Naive thymus-derived CD4-positive, alpha-beta T cell (primary cell): ENCODE measurements at regions of chr10 and their contacts with region 1.

Region 1: DNA sequence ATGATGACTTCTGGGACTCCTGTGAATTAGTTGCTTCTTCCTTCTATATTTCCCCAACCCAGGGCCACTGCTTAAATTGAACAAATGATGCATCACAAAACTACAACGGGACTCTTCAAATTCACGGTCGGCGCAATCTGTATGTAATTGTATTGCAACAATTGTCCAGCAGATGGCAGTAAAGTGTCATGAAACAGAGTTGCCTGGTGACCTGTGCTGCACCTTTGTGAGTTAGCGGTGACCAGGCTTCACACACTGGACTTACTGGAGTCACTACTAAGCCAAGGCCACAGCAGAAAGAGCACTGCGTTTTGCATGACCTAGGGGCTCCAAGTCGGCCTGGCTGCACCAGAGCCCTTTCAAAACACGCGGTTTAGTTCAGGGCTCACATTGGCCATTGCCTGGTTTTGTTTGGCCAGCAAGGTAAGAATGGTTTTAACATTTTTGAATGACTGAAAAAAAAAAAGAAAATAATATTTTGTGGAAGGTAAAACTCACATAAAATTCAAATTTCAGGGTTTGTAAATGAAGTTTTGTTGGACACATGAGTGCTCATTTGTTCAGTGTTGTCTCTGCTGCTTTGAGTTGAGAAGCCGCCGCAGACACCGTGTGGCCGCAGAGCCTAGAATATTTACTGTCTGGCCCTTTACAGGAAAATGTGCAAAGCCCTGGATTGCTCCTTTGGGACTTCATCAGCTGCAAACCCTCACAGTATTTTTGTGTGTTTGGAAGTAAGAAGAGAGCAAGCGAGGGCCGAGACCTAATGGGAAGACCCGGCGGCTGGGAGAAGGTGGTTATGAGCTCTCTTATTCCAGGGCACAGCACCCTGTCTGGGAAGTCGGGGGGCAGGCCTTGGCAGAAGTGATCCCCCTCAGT is 23.2 kb upstream of the ZNF32 start:
- DNase-seq: peak in 8 of 9 donors; percentile 18 to 71 (median 52)
- ATAC-seq: peak; percentile 75
- H3K4me3 ChIP-seq: no peak overlapping the region
- H3K4me3 Mint-ChIP-seq: no peak overlapping the region
- H3K27ac ChIP-seq: no peak overlapping the region
- H3K27ac Mint-ChIP-seq: no peak overlapping the region
- H3K4me1 ChIP-seq: no peaks in the 10 kb centered on the region
- H3K4me1 Mint-ChIP-seq: peaks cover 2 to 11% (median 6%) of the 10 kb centered on the region in 7 donors
- H3K27me3 ChIP-seq: no peaks in the 10 kb centered on the region
- H3K27me3 Mint-ChIP-seq: peaks cover 33 to 46% (median 38%) of the 10 kb centered on the region in 5 donors

Region 2: DNA sequence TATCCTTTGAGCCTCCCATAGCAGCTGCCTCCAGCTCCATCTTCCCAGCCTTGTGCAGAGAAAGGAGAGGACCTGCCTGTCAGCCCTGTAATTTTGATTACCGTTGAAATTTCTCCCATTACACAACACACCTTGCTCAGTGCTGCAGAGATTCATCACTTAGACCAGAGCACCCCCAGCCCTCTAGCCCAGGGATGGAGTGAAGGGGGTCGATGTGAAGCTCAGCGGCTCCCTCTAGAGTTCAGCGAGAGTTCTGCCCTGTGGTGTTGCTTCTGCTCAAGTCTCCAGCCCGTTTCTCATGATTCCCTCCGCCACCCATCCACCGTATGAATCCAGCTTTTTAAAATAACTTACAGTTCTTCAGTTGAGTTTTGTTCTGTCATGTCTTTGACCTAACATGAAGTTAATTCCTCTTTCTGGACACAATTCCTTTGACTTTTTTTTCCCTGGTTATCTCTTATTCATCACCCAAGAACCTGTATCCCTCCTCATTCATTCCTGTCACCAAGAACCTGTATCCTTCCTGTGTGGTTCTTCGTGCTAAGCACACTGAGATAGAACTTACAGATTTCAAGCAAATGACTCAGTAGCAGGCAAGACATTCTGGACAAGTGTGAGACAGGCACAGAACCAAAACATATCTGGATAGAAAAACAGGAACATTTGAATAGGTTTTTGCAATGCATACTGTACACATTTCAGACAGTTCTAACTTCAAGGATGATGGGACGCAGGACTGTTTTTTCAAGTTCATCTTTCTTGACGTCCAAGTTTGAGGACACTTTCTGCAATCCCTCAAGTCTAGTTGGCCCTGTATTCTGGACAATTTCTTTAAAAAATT is 11.8 kb after region 1 on chr10:
- CTCF ChIA-PET with region 1: interaction called, 13 read pairs
- POLR2A ChIA-PET with region 1: no interaction called
- intact Hi-C with region 1: no loop called
- DNase-seq: no peak
- ATAC-seq: peak; percentile 69
- H3K4me3 ChIP-seq: no peak overlapping the region
- H3K4me3 Mint-ChIP-seq: no peak overlapping the region
- H3K27ac ChIP-seq: no peak overlapping the region
- H3K27ac Mint-ChIP-seq: no peak overlapping the region
- H3K4me1 ChIP-seq: no peaks in the 10 kb centered on the region
- H3K4me1 Mint-ChIP-seq: peaks cover 0 to 4% (median 1%) of the 10 kb centered on the region in 7 donors
- H3K27me3 ChIP-seq: no peaks in the 10 kb centered on the region
- H3K27me3 Mint-ChIP-seq: peaks cover 25 to 37% (median 32%) of the 10 kb centered on the region in 5 donors

Region 3: DNA sequence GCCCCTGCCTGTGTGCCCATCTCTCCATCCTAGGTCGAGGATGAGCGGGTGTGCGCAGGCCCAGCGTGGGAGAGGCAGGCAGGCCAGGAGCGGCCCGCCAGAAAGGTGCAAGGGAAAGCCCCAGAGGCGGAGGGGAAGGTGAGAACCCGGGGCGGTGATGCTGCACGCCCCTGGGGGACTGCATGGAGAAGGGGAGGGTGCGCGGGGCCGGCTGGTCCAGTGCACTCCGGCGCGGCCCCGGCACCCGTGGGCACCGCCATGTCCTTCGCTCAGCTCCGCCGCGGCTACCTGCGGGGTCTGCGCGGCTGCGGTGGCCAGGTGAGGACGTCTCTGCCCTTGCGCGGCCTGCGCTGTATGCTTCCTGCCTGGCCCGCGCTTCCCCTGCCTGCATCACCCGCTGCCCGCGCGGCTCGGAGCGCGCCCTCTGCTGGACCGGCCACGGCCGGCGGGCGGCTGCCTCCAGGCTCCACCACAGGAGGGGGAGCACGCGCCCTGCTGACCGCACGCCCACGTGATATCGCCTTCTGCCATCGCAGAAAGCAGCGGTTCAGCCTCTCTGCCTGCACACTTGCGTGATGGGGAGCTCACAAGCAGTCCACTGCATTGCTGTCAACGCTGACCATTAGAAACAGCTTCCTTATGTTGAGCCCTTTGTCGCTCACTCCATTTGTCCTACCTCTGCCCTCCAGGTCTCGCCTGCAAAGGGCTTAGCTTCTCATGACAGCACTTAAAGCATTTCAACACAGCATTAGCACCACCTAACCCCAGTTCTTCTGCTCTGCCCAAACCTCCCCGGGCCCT is 639.1 kb after region 1 on chr10:
- CTCF ChIA-PET with region 1: interaction called, 3 read pairs
- POLR2A ChIA-PET with region 1: no interaction called
- intact Hi-C with region 1: loop called (anchors 1 kb)
- DNase-seq: peak in 8 of 9 donors; percentile 6 to 74 (median 46)
- ATAC-seq: peak; percentile 89
- H3K4me3 ChIP-seq: peak overlapping the region; percentile 40
- H3K4me3 Mint-ChIP-seq: peak overlapping the region in 9 of 10 donors; percentile 7 to 65 (median 43)
- H3K27ac ChIP-seq: no peak overlapping the region
- H3K27ac Mint-ChIP-seq: no peak overlapping the region
- H3K4me1 ChIP-seq: peaks cover 0 to 5% of the 10 kb centered on the region in 2 donors
- H3K4me1 Mint-ChIP-seq: peaks cover 0 to 13% (median 7%) of the 10 kb centered on the region in 7 donors
- H3K27me3 ChIP-seq: no peaks in the 10 kb centered on the region
- H3K27me3 Mint-ChIP-seq: peaks cover 11 to 34% (median 19%) of the 10 kb centered on the region in 5 donors

Region 4: DNA sequence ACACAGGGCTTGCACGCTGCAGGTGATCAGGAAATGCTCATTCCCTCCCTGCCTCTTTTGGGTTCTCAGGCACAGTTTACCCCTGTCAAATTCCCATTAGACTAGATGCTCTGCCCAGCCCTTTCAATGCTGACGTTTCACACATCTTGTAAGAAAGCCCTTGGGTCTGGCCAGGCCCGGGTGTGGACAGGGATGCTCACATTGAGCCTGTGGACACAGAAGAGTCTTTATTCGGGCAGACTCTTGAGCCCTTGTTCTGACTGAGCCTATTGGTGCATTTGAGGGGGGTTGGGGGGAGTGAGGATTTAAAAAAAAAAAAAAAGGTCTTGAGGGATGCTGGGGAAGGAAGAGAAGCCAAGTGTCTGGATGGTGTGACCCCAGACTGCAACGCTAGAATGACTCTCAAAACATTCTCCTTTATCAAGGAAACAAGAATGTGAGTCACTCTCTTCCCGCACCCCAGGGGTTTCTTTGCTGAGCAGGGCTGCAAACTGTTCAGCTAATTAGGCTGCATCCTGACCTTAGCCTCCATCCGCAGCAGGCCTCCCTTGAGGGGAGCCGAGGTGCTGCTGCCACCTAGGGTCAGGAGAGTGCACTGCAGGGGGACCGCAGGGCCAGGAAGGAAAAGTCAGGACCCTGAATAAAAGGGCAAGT is 1185.6 kb after region 1 on chr10:
- CTCF ChIA-PET with region 1: interaction called, 5 read pairs
- POLR2A ChIA-PET with region 1: no interaction called
- intact Hi-C with region 1: loop called (anchors 1 kb)
- DNase-seq: peak in 6 of 9 donors; percentile 27 to 69 (median 43)
- ATAC-seq: peak; percentile 79
- H3K4me3 ChIP-seq: no peak overlapping the region
- H3K4me3 Mint-ChIP-seq: no peak overlapping the region
- H3K27ac ChIP-seq: no peak overlapping the region
- H3K27ac Mint-ChIP-seq: peak overlapping the region in 1 of 9 donors; percentile 74
- H3K4me1 ChIP-seq: no peaks in the 10 kb centered on the region
- H3K4me1 Mint-ChIP-seq: no peaks in the 10 kb centered on the region
- H3K27me3 ChIP-seq: no peaks in the 10 kb centered on the region
- H3K27me3 Mint-ChIP-seq: peaks cover 3 to 7% (median 4%) of the 10 kb centered on the region in 5 donors

Region 5: GRCh38 chr10:44974628-44975431 is 1302.9 kb after region 1 on chr10:
- CTCF ChIA-PET with region 1: no interaction called
- POLR2A ChIA-PET with region 1: no interaction called
- intact Hi-C with region 1: loop called in 1 of 2 experiments (anchors 5 kb)
- DNase-seq: peak; percentile 26 to 83 (median 68)
- ATAC-seq: peak; percentile 93
- H3K4me3 ChIP-seq: peak overlapping the region; percentile 52
- H3K4me3 Mint-ChIP-seq: peak overlapping the region; percentile 63 to 81 (median 72)
- H3K27ac ChIP-seq: no peak overlapping the region
- H3K27ac Mint-ChIP-seq: peak overlapping the region in 5 of 9 donors; percentile 4 to 83 (median 31)
- H3K4me1 ChIP-seq: peaks cover 10 to 11% of the 10 kb centered on the region in 2 donors
- H3K4me1 Mint-ChIP-seq: peaks cover 0 to 39% (median 22%) of the 10 kb centered on the region in 7 donors
- H3K27me3 ChIP-seq: no peaks in the 10 kb centered on the region
- H3K27me3 Mint-ChIP-seq: no peaks in the 10 kb centered on the region